ENCODE measurements at regions of chr2 and their contacts with region 1.

Region 1: GRCh38 chr2:177254433-177255226 is 9.9 kb downstream of the NFE2L2 start:
- DNase-seq: peak; percentile 60
- ATAC-seq: peak; percentile 92
- H3K4me3 ChIP-seq: no peak overlapping the region
- H3K27ac ChIP-seq: peak overlapping the region; percentile 26; the same call in 1 of the 2 replicates
- H3K4me1 ChIP-seq: peaks cover 50 to 82% of the 10 kb centered on the region in 2 experiments
- H3K27me3 ChIP-seq: no peaks in the 10 kb centered on the region
- CTCF ChIP-seq: peak; percentile 48 to 94 (median 87); a peak in 5 of 6 replicates
- POLR2A ChIP-seq: no peak
- RAD21 ChIP-seq: peak; percentile 61

Region 2: GRCh38 chr2:176206682-176207081 is 1047.9 kb before region 1 on chr2:
- CTCF ChIA-PET with region 1: no interaction called
- POLR2A ChIA-PET with region 1: no interaction called
- RAD21 ChIA-PET with region 1: no interaction called
- intact Hi-C with region 1: no loop called
- DNase-seq: no peak
- ATAC-seq: no peak
- H3K4me3 ChIP-seq: no peak overlapping the region
- H3K27ac ChIP-seq: no peak overlapping the region
- H3K4me1 ChIP-seq: no peaks in the 10 kb centered on the region
- H3K27me3 ChIP-seq: 0 out of 2 replicates have a peak, but pooled peaks cover 4% of the 10 kb centered on the region
- CTCF ChIP-seq: no peak
- POLR2A ChIP-seq: no peak
- RAD21 ChIP-seq: no peak

Region 3: GRCh38 chr2:177141866-177142265 is 112.8 kb before region 1 on chr2:
- CTCF ChIA-PET with region 1: no interaction called
- POLR2A ChIA-PET with region 1: no interaction called
- RAD21 ChIA-PET with region 1: no interaction called
- intact Hi-C with region 1: no loop called
- DNase-seq: no peak
- ATAC-seq: no peak
- H3K4me3 ChIP-seq: no peak overlapping the region
- H3K27ac ChIP-seq: no peak overlapping the region
- H3K4me1 ChIP-seq: no peaks in the 10 kb centered on the region
- H3K27me3 ChIP-seq: no peaks in the 10 kb centered on the region
- CTCF ChIP-seq: no peak
- POLR2A ChIP-seq: no peak
- RAD21 ChIP-seq: no peak

Region 4: GRCh38 chr2:177242116-177242987 is 12.3 kb before region 1 on chr2:
- CTCF ChIA-PET with region 1: interaction called, 22 read pairs
- POLR2A ChIA-PET with region 1: interaction called, 8 read pairs
- RAD21 ChIA-PET with region 1: no interaction called
- intact Hi-C with region 1: no loop called
- DNase-seq: peak; percentile 83
- ATAC-seq: peak; percentile 71
- H3K4me3 ChIP-seq: peak overlapping the region; percentile 27 to 48
- H3K27ac ChIP-seq: peak overlapping the region; percentile 81
- H3K4me1 ChIP-seq: peaks cover 66 to 77% of the 10 kb centered on the region in 2 experiments
- H3K27me3 ChIP-seq: no peaks in the 10 kb centered on the region
- CTCF ChIP-seq: no peak
- POLR2A ChIP-seq: no peak
- RAD21 ChIP-seq: no peak

Measured in HCT116 (cell line).